ENCODE measurements at regions of chr17 and their contacts with region 1.

Region 1: GRCh38 chr17:50949989-50950881 is 84.1 kb upstream of the TOB1 start:
- DNase-seq: peak; percentile 72
- ATAC-seq: peak; percentile 88
- H3K4me3 Mint-ChIP-seq: no peak overlapping the region
- H3K27ac Mint-ChIP-seq: no peak overlapping the region
- H3K4me1 Mint-ChIP-seq: peaks cover 20% of the 10 kb centered on the region
- H3K27me3 Mint-ChIP-seq: peaks cover 6% of the 10 kb centered on the region

Region 2: GRCh38 chr17:50841949-50842354 is 108.3 kb before region 1 on chr17:
- CTCF ChIA-PET with region 1: interaction called, 319 read pairs
- DNase-seq: peak; percentile 72
- ATAC-seq: peak; percentile 79
- H3K4me3 Mint-ChIP-seq: no peak overlapping the region
- H3K27ac Mint-ChIP-seq: no peak overlapping the region
- H3K4me1 Mint-ChIP-seq: no peaks in the 10 kb centered on the region
- H3K27me3 Mint-ChIP-seq: no peaks in the 10 kb centered on the region

Region 3: GRCh38 chr17:50917418-50917743 is 32.9 kb before region 1 on chr17:
- CTCF ChIA-PET with region 1: no interaction called
- DNase-seq: no peak
- ATAC-seq: no peak
- H3K4me3 Mint-ChIP-seq: no peak overlapping the region
- H3K27ac Mint-ChIP-seq: no peak overlapping the region
- H3K4me1 Mint-ChIP-seq: peaks cover 32% of the 10 kb centered on the region
- H3K27me3 Mint-ChIP-seq: no peaks in the 10 kb centered on the region